Motor neuron (in vitro differentiated cells): ENCODE measurements at regions of chr17 and their contacts with region 1.

Region 1: DNA sequence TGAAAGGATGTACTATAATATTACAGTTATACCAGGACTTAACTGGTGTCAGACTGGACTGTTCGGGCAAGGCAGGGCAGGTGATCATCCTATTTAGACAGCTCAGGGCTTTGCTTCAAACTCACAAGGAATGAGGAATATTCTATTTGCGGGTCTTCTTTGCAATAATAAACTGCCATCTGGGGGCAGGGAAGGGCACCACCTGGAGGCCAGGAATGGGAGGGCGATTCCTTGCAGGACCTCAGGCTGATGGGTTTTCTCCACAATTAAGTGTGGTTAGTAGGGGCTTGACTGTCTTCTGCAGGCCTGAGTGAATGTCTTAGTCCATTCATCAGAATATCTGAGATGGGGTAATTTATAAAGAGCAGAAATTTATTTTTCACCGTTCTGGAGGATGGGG is 424.1 kb downstream of the CA10 start:
- ATAC-seq: no peak
- H3K4me3 ChIP-seq: no peak overlapping the region
- H3K27ac ChIP-seq: no peak overlapping the region
- H3K4me1 ChIP-seq: peaks cover 7 to 18% of the 10 kb centered on the region in 2 donors

Region 2: GRCh38 chr17:51555153-51555552 is 179.3 kb before region 1 on chr17:
- in situ Hi-C with region 1: no loop called
- ATAC-seq: no peak
- H3K4me3 ChIP-seq: no peak overlapping the region
- H3K27ac ChIP-seq: no peak overlapping the region
- H3K4me1 ChIP-seq: no peaks in the 10 kb centered on the region

Region 3: DNA sequence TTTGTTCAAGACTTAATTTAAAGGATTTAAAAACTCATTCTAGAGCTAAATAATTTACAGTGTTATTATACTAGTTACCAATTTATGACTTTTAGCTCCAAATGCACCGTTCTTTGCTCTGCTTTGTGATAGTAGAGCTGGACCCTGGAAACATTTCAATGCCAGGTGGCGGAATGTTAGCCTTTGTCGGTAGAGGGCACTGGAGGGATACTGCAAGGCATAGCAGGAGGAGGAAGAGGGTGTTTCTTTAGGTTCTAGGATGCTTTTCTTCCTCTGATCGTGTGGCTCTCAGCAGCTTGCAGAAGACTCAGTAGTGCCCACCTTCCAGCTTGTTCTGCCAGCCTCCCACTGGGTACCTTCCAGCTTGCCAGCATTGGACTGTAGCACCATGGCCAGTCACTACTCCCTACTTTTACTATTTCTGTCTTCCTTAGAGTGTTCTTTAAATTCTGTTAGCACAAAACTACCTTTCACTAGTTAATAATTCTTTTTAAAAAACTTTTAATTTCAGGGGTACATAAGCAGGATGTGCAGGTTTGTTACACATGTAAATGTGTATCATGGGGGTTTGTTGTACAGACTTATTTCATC is 148.9 kb before region 1 on chr17:
- in situ Hi-C with region 1: loop called in 2 of 9 experiments (anchors 25 kb)
- ATAC-seq: peak in 4 of 8 experiments; percentile 19 to 78 (median 72)
- H3K4me3 ChIP-seq: no peak overlapping the region
- H3K27ac ChIP-seq: no peak overlapping the region
- H3K4me1 ChIP-seq: no peaks in the 10 kb centered on the region